Activated CD4-positive, alpha-beta T cell treated with anti-CD3 and anti-CD28 coated beads for 36 hours (primary cell): ENCODE measurements at regions of chr1 and their contacts with region 1.

Region 1: DNA sequence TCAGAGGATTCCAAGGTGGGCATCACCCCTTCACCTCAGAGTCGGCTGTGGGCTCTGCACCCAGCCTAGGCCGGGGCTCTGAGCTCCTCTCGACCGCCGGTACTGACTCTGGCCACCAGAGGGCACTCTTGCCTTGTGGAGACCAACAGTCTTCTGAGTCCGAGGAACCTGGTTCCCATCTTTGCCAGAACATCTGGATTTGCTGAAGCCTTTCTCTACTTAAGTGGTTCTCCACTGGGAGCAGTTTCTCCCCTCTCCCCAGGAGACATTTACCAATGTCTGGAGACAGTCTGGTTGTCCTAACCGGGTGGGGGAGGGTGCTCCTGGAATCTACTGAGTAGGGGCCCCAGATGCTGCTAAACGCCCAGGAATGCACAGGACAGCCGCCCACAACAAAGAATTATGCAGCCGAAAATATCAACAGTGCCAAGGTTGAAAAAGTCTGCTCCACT is 9.4 kb downstream of the ETV3L start:
- DNase-seq: peak; percentile 94
- ATAC-seq: peak; percentile 93
- H3K4me3 Mint-ChIP-seq: no peak overlapping the region
- H3K27ac Mint-ChIP-seq: no peak overlapping the region
- H3K4me1 Mint-ChIP-seq: no peaks in the 10 kb centered on the region
- H3K27me3 Mint-ChIP-seq: peaks cover 2% of the 10 kb centered on the region

Region 2: GRCh38 chr1:157073944-157074767 is 16.1 kb before region 1 on chr1:
- CTCF ChIA-PET with region 1: interaction called, 27 read pairs
- POLR2A ChIA-PET with region 1: no interaction called
- intact Hi-C with region 1: no loop called
- DNase-seq: peak; percentile 68
- ATAC-seq: no peak
- H3K4me3 Mint-ChIP-seq: no peak overlapping the region
- H3K27ac Mint-ChIP-seq: no peak overlapping the region
- H3K4me1 Mint-ChIP-seq: no peaks in the 10 kb centered on the region
- H3K27me3 Mint-ChIP-seq: peaks cover 18% of the 10 kb centered on the region

Region 3: GRCh38 chr1:157110003-157110402 is 19.8 kb after region 1 on chr1:
- CTCF ChIA-PET with region 1: interaction called, 12 read pairs
- POLR2A ChIA-PET with region 1: no interaction called
- intact Hi-C with region 1: no loop called
- DNase-seq: no peak
- ATAC-seq: no peak
- H3K4me3 Mint-ChIP-seq: no peak overlapping the region
- H3K27ac Mint-ChIP-seq: no peak overlapping the region
- H3K4me1 Mint-ChIP-seq: peaks cover 17% of the 10 kb centered on the region
- H3K27me3 Mint-ChIP-seq: peaks cover 32% of the 10 kb centered on the region

Region 4: DNA sequence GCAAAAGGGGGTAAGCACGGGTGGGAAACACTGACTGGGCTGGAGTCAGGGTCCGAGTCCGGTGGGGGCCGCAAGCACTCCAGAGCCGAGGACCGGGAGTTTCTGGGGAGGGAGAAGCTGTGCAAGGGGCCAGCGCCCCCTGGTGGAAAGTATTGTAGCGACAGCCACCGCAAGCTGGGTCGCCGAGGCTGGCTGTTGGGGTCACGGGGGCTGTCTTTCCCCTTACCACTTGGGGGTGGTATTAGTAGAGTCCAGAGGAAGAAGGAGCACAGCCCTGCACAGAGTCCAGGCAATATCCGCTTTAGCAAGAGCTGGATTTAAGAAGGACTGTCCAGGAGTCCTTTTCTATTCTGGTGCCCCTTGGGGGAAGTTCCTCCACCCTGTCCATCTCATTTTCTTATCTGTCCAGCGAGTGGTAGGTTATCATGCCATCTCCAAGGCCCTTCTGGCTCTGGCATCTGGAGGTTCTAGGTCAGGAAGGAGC is 65.9 kb after region 1 on chr1:
- CTCF ChIA-PET with region 1: interaction called, 455 read pairs
- POLR2A ChIA-PET with region 1: interaction called, 11 read pairs
- intact Hi-C with region 1: loop called (anchors 1 kb)
- DNase-seq: peak; percentile 89
- ATAC-seq: peak; percentile 88
- H3K4me3 Mint-ChIP-seq: no peak overlapping the region
- H3K27ac Mint-ChIP-seq: no peak overlapping the region
- H3K4me1 Mint-ChIP-seq: peaks cover 16% of the 10 kb centered on the region
- H3K27me3 Mint-ChIP-seq: peaks cover 11% of the 10 kb centered on the region

Region 5: DNA sequence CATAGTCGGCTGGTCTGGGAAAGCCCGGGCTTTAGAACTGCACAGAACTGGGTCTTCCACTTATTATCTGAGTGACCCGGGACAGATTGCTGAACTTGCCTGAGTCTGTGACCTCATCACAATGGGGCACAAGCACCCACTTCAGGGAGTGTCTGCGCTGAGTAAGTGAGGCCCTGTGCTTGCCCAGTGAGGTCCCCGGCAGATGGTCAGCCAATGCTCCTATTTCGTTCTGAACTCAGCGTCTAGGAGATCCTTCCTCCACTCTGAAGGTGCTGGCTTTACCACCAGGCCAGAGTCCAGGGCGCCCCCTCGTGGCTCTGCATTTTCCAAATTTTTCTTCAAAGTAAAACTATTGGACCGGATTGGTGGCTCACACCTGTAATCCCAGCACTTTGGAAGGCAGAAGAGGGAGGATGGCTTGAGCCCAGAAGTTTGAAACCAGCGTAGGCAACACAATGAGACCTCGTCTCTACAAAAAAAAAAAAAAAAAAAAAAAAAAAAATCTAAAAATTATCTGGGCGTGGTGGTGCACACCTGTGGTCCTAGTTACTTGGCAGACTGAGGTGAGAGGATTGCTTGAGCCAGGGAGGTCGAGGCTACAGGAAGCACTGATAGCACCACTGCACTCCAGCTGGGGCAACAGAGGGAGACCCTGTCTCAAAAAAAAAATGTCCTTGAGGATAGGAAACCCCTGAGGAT is 400.4 kb after region 1 on chr1:
- CTCF ChIA-PET with region 1: no interaction called
- POLR2A ChIA-PET with region 1: no interaction called
- intact Hi-C with region 1: loop called in 1 of 2 experiments (anchors 10 kb)
- DNase-seq: peak; percentile 83
- ATAC-seq: no peak
- H3K4me3 Mint-ChIP-seq: no peak overlapping the region
- H3K27ac Mint-ChIP-seq: no peak overlapping the region
- H3K4me1 Mint-ChIP-seq: no peaks in the 10 kb centered on the region
- H3K27me3 Mint-ChIP-seq: peaks cover 20% of the 10 kb centered on the region

Region 6: GRCh38 chr1:157646144-157646543 is 555.9 kb after region 1 on chr1:
- CTCF ChIA-PET with region 1: no interaction called
- POLR2A ChIA-PET with region 1: no interaction called
- intact Hi-C with region 1: no loop called
- DNase-seq: no peak
- ATAC-seq: no peak
- H3K4me3 Mint-ChIP-seq: no peak overlapping the region
- H3K27ac Mint-ChIP-seq: no peak overlapping the region
- H3K4me1 Mint-ChIP-seq: no peaks in the 10 kb centered on the region
- H3K27me3 Mint-ChIP-seq: peaks cover 2% of the 10 kb centered on the region